ENCODE measurements at regions of chr11 and their contacts with region 1.

Region 1: GRCh38 chr11:78188286-78189173 is at the starts of genes KCTD21 and USP35:
- DNase-seq: peak; percentile 98
- H3K4me3 Mint-ChIP-seq: peak within 1 kb of the TSS; percentile 99
- H3K27ac Mint-ChIP-seq: peak within 1 kb of the TSS; percentile 99
- H3K4me1 Mint-ChIP-seq: peaks cover 53% of the 10 kb centered on the region
- H3K27me3 Mint-ChIP-seq: no peaks in the 10 kb centered on the region
- total RNA-seq, gene KCTD21: 11.7 and 12.0 TPM in 2 replicates
- total RNA-seq, gene USP35: 10.4 and 13.1 TPM in 2 replicates

Region 2: DNA sequence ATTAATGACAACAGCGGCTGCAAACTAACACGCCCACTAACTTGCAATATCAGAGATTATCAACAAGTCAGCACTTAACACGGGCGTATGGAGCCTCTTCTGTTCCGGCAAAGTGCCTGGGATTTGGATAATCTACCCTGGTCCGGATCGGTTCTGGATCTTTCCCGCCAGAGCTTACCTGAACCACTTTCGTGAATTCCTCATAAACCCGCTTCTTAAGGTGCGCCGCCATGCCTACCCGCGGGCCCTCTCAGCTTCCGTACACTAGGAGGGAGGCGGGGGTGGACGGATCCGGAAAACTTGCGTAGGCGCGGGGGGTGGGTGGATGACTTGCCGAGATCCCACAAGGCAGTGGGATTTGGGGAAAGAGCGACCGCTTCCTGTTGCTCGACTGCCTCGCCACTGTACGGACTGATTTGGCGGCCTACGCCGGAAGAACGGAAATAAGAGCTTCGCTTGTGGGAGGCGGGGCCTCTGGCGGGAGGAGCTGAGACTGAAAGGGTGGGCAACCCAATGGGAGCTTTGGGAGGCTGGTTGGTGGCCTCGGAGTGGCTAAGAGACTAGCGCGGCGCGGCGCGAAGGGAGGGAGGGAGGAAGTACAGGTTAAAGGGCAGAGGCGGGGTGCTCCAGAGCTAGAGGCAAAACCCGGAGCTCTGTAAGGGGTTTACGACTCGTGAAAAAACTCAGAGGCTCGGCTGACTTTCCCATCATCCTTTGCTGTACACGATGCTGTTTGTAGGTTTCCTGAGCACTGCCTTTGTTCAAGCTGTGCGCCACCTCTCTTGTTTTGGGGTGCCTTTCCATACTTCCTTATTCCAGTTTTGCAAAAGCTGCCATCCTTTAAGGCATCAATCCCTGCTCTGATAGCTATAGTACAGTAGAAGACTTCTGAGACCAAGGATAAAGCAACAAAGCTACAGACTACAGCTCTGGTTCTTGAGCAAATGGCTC is 193.8 kb before region 1 on chr11 and contains the start of gene INTS4:
- intact Hi-C with region 1: loop called (anchors 1 kb)
- DNase-seq: peak; percentile 99
- H3K4me3 Mint-ChIP-seq: peak within 1 kb of the TSS; percentile 97
- H3K27ac Mint-ChIP-seq: peak within 1 kb of the TSS; percentile 92
- H3K4me1 Mint-ChIP-seq: peaks cover 21% of the 10 kb centered on the region
- H3K27me3 Mint-ChIP-seq: peaks cover 2% of the 10 kb centered on the region
- total RNA-seq, gene INTS4: 60.0 and 60.8 TPM in 2 replicates

Region 3: DNA sequence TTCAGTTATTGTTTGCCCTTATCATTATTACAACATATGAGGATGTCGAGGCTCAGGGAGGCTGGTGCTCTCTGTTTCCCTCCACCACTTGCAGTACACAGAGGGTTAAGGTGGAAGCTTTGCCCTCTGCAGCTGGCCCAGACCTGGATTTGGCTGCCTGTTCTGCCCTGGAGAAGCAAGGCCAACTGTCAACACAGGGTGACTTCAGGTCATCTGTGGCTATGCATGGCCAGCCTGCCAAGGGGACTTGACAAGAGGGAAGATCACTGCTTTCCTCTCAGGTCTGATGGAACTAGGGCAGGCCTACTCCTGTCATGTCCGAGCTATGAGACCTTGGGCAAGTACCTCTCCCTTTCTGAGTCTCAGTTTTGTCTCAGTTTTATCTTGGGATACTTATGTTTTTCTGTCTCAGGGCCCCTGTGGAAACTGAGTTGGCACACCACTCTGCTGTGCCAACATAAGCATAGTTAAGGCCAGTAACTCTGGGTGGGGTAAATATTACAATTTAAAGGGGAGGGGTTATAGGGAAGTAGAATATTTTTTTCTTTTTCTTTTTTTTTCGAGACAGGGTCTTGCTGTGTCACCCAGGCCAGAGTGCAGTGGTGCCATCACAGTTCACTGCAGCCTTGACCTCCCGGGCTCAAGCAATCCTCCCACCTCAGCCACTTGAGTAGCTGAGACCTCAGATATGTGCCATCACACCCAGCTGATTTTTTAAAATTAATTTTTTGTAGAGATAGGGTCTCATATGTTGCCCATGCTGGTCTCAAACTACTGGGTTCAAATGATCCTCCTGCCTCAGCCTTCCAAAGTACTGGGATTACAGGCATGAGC is 127.2 kb before region 1 on chr11:
- intact Hi-C with region 1: no loop called
- DNase-seq: no peak
- H3K4me3 Mint-ChIP-seq: no peak overlapping the region
- H3K27ac Mint-ChIP-seq: no peak overlapping the region
- H3K4me1 Mint-ChIP-seq: no peaks in the 10 kb centered on the region
- H3K27me3 Mint-ChIP-seq: no peaks in the 10 kb centered on the region

Region 4: GRCh38 chr11:78139422-78140391 is 48.8 kb before region 1 on chr11 and contains the start of gene ALG8:
- intact Hi-C with region 1: loop called (anchors 1 kb)
- DNase-seq: peak; percentile 99
- H3K4me3 Mint-ChIP-seq: peak within 1 kb of the TSS; percentile 86
- H3K27ac Mint-ChIP-seq: peak within 1 kb of the TSS; percentile 95
- H3K4me1 Mint-ChIP-seq: peaks cover 43% of the 10 kb centered on the region
- H3K27me3 Mint-ChIP-seq: no peaks in the 10 kb centered on the region
- total RNA-seq, gene ALG8: 60.9 and 61.7 TPM in 2 replicates

Region 5: DNA sequence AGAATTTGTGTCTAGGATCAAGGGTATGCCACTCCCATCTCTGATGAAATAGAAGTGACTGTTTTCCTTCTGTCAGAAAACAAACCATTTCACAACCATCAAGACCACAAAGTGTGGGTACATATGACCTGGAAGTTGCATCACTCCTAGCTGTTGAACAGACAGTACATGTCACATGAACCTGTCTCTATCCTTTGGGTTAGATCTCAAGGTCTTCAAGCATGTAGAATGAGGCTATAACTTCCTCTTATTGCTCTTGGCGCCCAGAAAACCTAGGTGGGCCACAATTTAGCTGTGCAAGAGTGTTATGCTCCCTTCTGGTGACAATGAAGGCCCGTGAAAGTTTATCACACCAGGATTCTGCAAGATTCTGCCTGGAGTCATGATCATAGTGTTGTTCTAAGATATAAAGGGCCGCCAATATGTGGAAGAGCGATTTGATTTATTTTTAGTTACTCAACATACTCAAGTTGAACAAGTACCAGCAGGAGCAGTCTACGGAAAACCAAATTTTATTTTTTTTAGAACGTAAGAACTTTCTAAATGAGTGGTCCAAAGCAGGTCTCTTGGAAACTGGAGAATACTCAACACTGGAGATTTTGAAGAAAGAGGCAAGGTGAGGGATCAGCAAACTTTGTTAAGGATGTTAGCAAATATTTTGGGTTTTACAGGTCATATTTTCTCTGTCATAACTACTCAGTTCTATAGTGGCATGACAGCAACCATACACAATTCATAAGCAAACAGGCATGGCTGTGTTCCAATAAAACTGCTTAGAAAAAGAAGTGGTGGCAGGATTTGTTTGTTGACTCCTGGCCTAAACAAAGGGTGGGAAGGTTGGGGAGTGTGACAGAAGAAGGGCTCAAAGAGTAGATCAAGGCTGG is 102.0 kb after region 1 on chr11:
- intact Hi-C with region 1: loop called (anchors 5 kb)
- DNase-seq: peak; percentile 85
- H3K4me3 Mint-ChIP-seq: peak overlapping the region; percentile 72
- H3K27ac Mint-ChIP-seq: peak overlapping the region; percentile 84
- H3K4me1 Mint-ChIP-seq: peaks cover 50% of the 10 kb centered on the region
- H3K27me3 Mint-ChIP-seq: no peaks in the 10 kb centered on the region

Region 6: GRCh38 chr11:78564490-78565467 is 376.2 kb after region 1 on chr11:
- intact Hi-C with region 1: loop called (anchors 5 kb)
- DNase-seq: peak; percentile 89
- H3K4me3 Mint-ChIP-seq: no peak overlapping the region
- H3K27ac Mint-ChIP-seq: peak overlapping the region; percentile 5
- H3K4me1 Mint-ChIP-seq: peaks cover 42% of the 10 kb centered on the region
- H3K27me3 Mint-ChIP-seq: no peaks in the 10 kb centered on the region

Region 7: GRCh38 chr11:78586452-78587046 is 398.0 kb after region 1 on chr11:
- intact Hi-C with region 1: no loop called
- DNase-seq: peak; percentile 61
- H3K4me3 Mint-ChIP-seq: no peak overlapping the region
- H3K27ac Mint-ChIP-seq: no peak overlapping the region
- H3K4me1 Mint-ChIP-seq: no peaks in the 10 kb centered on the region
- H3K27me3 Mint-ChIP-seq: peaks cover 29% of the 10 kb centered on the region